PC-3 (cell line): ENCODE measurements at regions of chr3 and their contacts with region 1.

Region 1: DNA sequence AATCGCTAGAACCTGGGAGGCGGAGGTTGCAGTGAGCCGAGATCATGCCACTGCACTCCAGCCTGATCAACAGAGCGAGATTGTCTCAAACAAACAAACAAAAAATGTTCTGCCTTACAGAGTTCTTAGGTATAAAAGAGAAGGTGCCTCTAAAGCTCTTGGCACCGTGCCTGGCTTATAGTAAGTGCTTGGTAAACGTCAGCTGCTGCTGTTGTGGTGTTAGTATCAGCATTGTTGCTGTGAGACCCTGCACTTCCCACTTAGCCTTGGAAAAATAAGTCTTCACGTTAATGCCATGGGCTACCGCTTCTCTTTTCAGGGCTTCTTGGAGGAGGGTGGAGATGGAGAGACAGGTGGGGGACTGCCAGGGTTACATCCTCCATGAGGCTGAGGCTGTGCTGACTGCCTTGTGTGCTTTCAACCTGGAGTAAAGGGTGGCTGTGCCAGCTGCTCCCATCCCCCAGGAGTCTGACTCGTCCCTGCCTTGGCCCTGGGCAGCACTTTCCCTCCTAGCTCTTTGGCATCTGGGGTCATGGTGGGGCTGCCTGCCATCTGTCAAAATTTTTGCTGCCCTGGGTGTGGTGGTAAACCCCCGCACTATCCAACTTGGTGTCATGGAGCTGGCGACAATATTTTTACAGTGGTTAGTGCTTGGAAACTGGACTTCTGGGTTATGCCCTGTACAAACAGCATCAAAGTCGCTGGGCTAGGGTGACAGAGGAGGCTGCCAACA is 17.8 kb downstream of the FLNB start:
- DNase-seq: peak; percentile 70
- ATAC-seq: peak; percentile 36
- H3K4me3 ChIP-seq: peak overlapping the region; percentile 8; the same call in 1 of the 2 replicates
- H3K27ac ChIP-seq: peak overlapping the region; percentile 82
- H3K4me1 ChIP-seq: peaks cover 66% of the 10 kb centered on the region
- H3K27me3 ChIP-seq: no peaks in the 10 kb centered on the region
- CTCF ChIP-seq: no peak

Region 2: DNA sequence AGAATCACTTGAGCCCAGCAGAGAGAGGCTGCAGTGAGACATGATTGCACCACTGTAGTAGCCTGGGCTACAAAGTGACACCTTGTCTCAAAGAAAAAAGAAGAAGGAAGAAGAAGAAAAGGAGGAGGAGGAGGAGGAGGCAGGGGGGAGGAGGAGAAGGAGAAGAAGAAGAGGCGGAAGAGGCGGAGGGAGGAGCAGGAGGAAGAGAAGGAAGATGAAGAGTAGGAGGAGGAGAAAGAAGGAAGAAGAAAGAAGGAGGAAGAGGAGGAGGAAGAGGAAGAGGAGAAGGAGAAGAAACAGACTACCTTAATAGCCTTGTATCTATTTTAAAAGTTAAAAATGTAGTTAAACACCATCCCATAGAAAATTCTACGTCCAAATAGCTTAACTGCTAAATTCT is 409.8 kb before region 1 on chr3:
- CTCF ChIA-PET with region 1: no interaction called
- POLR2A ChIA-PET with region 1: no interaction called
- intact Hi-C with region 1: no loop called
- DNase-seq: no peak
- ATAC-seq: no peak
- H3K4me3 ChIP-seq: no peak overlapping the region
- H3K27ac ChIP-seq: no peak overlapping the region
- H3K4me1 ChIP-seq: no peaks in the 10 kb centered on the region
- H3K27me3 ChIP-seq: no peaks in the 10 kb centered on the region
- CTCF ChIP-seq: no peak

Region 3: GRCh38 chr3:58072052-58072762 is 46.2 kb after region 1 on chr3:
- CTCF ChIA-PET with region 1: no interaction called
- POLR2A ChIA-PET with region 1: interaction called, 12 read pairs
- intact Hi-C with region 1: no loop called
- DNase-seq: no peak
- ATAC-seq: no peak
- H3K4me3 ChIP-seq: no peak overlapping the region
- H3K27ac ChIP-seq: no peak overlapping the region
- H3K4me1 ChIP-seq: 0 out of 2 replicates have a peak, but pooled peaks cover 2% of the 10 kb centered on the region
- H3K27me3 ChIP-seq: no peaks in the 10 kb centered on the region
- CTCF ChIP-seq: no peak

Region 4: DNA sequence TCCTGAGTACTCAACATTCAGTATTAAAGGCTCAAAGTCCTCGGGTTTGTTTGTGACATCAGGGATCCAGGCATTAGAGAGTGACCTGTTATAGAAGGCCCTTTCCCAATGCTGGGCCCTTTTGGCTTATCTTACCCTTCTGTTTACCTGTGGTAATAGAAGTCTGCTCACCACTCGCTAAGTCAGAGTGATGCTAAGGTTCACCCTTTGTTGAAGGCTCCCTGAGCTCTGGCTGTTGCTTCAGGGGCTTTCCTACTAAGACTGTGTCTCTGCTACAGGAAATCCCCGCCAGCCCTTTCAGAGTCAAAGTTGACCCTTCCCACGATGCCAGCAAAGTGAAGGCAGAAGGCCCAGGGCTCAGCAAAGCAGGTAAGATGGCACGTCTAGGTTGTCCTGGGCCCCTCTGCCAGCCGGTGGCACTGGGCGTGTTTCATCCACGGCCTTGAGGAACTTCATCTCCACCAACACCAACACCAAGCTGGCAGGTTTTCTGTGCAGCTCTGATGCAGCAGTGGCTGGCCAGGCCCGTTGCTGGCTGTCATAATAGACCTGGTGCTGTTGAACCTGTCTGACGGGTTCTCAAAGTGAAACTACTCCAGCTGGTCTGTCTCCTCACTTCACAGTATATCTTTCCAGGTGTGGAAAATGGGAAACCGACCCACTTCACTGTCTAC is 85.6 kb after region 1 on chr3:
- CTCF ChIA-PET with region 1: no interaction called
- POLR2A ChIA-PET with region 1: interaction called, 28 read pairs
- intact Hi-C with region 1: no loop called
- DNase-seq: peak; percentile 90
- ATAC-seq: peak; percentile 54
- H3K4me3 ChIP-seq: peak overlapping the region; percentile 33; the same call in 1 of the 2 replicates
- H3K27ac ChIP-seq: peak overlapping the region; percentile 66
- H3K4me1 ChIP-seq: peaks cover 19% of the 10 kb centered on the region
- H3K27me3 ChIP-seq: no peaks in the 10 kb centered on the region
- CTCF ChIP-seq: no peak